WTC11 (cell line): ENCODE measurements at regions of chr3 and their contacts with region 1.

Region 1: GRCh38 chr3:137013955-137014688 is 56.3 kb downstream of the IL20RB start:
- DNase-seq: peak; percentile 90
- ATAC-seq: peak; percentile 87
- H3K4me3 Mint-ChIP-seq: peak overlapping the region; percentile 61
- H3K27ac Mint-ChIP-seq: no peak overlapping the region
- H3K4me1 Mint-ChIP-seq: peaks cover 9% of the 10 kb centered on the region
- H3K27me3 Mint-ChIP-seq: no peaks in the 10 kb centered on the region; the same call in 1 of the 2 replicates
- CTCF ChIP-seq: peak; percentile 96

Region 2: GRCh38 chr3:136396916-136397315 is 617.2 kb before region 1 on chr3:
- CTCF ChIA-PET with region 1: interaction called, 21 read pairs
- POLR2A ChIA-PET with region 1: no interaction called
- DNase-seq: no peak
- ATAC-seq: no peak
- H3K4me3 Mint-ChIP-seq: no peak overlapping the region
- H3K27ac Mint-ChIP-seq: no peak overlapping the region
- H3K4me1 Mint-ChIP-seq: no peaks in the 10 kb centered on the region
- H3K27me3 Mint-ChIP-seq: no peaks in the 10 kb centered on the region
- CTCF ChIP-seq: no peak

Region 3: DNA sequence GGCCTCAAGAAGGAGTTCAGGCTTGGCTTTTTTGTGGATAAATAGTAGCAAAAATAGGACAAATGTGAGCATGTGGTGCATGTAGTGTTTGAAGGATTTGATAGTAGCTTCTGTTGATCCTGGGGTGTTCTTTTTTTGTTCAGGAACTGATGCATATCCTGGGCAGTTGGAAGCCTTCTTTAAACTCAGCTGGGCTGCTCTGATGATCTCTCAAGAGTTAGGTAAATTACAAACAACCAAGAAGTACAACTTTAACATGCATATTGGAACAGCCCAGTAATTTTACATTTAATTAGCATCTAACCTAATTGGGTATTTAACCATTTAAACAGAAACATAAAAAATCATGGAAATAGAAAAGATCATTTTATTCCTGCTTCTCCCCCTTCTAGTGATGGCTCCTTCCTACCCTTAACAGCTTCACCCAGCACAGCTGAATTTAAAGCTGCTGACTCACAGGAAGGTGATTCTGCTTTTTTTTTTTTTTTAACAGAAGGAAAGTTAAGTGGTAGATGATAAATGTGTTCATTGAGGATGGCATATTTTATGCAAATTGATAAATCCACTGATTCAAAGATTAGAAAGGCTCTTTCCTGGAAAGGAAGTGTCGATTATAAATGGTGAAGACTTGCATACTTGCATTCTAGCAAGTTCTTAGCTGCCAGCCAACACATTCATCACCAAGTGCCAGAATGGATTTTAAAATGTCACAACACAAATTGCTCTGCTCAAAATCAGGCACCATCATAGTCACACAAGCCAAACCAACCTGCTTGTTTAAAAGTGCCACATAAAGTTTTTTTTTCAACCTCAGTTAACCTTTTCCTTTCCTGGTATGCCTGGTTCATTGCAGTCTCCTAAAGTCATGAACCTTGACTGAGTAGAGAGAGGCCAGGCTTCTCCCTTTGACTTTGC is 175.2 kb before region 1 on chr3:
- CTCF ChIA-PET with region 1: interaction called, 11 read pairs
- POLR2A ChIA-PET with region 1: no interaction called
- DNase-seq: no peak
- ATAC-seq: peak; percentile 57
- H3K4me3 Mint-ChIP-seq: peak overlapping the region; percentile 5; the same call in 1 of the 2 replicates
- H3K27ac Mint-ChIP-seq: peak overlapping the region; percentile 61; the same call in 1 of the 2 replicates
- H3K4me1 Mint-ChIP-seq: peaks cover 29% of the 10 kb centered on the region
- H3K27me3 Mint-ChIP-seq: no peaks in the 10 kb centered on the region; the same call in 1 of the 2 replicates
- CTCF ChIP-seq: no peak

Region 4: GRCh38 chr3:136861890-136862616 is 152.1 kb before region 1 on chr3 and contains the start of gene NCK1:
- CTCF ChIA-PET with region 1: interaction called, 26 read pairs
- POLR2A ChIA-PET with region 1: interaction called, 4 read pairs
- DNase-seq: peak; percentile 97
- ATAC-seq: peak; percentile 96
- H3K4me3 Mint-ChIP-seq: peak within 1 kb of the TSS; percentile 94
- H3K27ac Mint-ChIP-seq: peak within 1 kb of the TSS; percentile 97
- H3K4me1 Mint-ChIP-seq: peaks cover 46% of the 10 kb centered on the region
- H3K27me3 Mint-ChIP-seq: no peaks in the 10 kb centered on the region
- CTCF ChIP-seq: no peak
- total RNA-seq, gene NCK1: 24.4 to 31.6 TPM (median 28.9 TPM) in 3 replicates

Region 5: DNA sequence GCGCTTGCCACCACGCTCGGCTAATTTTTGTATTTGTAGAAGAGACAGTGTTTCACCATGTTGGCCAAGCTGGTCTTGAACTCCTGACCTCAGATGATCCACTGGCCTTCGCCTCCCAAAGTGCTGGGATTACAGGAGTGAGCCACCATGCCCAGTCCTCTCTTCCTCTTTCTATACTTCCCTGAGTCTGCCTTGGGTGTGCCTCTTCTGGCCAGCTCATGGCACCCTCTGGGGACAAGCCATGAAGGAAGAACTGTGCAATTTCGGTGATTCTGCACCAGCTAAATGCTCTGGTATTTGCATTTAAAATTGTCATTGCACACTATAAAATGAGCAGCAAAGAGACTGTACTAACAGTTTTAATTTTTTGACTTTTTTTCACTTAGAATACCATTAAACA is 10.2 kb after region 1 on chr3:
- CTCF ChIA-PET with region 1: interaction called, 13 read pairs
- POLR2A ChIA-PET with region 1: no interaction called
- DNase-seq: no peak
- ATAC-seq: no peak
- H3K4me3 Mint-ChIP-seq: no peak overlapping the region
- H3K27ac Mint-ChIP-seq: no peak overlapping the region
- H3K4me1 Mint-ChIP-seq: peaks cover 8% of the 10 kb centered on the region
- H3K27me3 Mint-ChIP-seq: no peaks in the 10 kb centered on the region; the same call in 1 of the 2 replicates
- CTCF ChIP-seq: no peak

Region 6: DNA sequence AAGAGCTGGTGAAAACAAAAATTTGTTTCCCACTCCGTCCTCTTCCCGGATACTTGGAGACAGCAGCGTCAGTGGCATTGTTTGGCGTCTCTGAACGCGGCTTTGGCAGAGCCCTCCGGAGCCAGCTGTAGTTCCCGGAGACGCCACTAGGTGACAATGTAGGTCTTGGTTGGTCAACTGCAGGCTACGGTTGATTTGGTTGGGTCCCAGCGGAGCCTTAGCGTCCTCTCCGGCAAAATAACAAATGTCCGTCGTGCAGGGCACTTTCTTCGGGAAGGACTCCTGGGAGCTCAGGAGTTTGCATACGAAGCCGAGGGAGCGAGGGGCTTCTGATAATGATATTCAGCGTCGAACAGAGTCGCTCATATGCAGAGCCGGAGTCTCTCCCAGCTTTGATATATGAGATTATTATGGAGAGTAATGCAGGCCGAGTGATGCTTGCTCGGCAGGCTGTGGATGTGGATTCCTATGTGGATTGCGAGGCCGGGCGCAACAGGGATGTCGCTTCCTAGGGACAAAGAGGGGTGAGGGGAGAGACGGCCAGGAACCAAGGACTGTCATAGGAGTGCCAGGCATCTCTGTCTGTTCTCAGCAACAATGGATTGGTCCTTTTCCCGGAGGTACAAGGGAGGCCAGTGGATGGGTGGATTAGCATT is 18.5 kb after region 1 on chr3:
- CTCF ChIA-PET with region 1: interaction called, 14 read pairs
- POLR2A ChIA-PET with region 1: no interaction called
- DNase-seq: peak; percentile 98
- ATAC-seq: peak; percentile 75
- H3K4me3 Mint-ChIP-seq: peak overlapping the region; percentile 70
- H3K27ac Mint-ChIP-seq: 0 out of 2 replicates have a peak overlapping the region, but pooled peaks have one; percentile 11
- H3K4me1 Mint-ChIP-seq: peaks cover 29% of the 10 kb centered on the region
- H3K27me3 Mint-ChIP-seq: peaks cover 30% of the 10 kb centered on the region
- CTCF ChIP-seq: peak; percentile 96